ENCODE measurements at regions of chr2 and their contacts with region 1.

Region 1: GRCh38 chr2:204365811-204366210 is 179.5 kb upstream of the PARD3B start:
- DNase-seq: no peak
- ATAC-seq: no peak
- H3K4me3 ChIP-seq: no peak overlapping the region
- H3K27ac ChIP-seq: no peak overlapping the region
- H3K4me1 ChIP-seq: no peaks in the 10 kb centered on the region
- H3K27me3 ChIP-seq: no peaks in the 10 kb centered on the region

Region 2: GRCh38 chr2:204608237-204608939 is 242.6 kb after region 1 on chr2:
- intact Hi-C with region 1: loop called in 1 of 4 experiments (anchors 10 kb)
- DNase-seq: peak in 2 of 3 donors; percentile 32 to 54
- ATAC-seq: peak; percentile 65 to 78
- H3K4me3 ChIP-seq: no peak overlapping the region
- H3K27ac ChIP-seq: no peak overlapping the region
- H3K4me1 ChIP-seq: peaks cover 13% of the 10 kb centered on the region
- H3K27me3 ChIP-seq: no peaks in the 10 kb centered on the region

Measured in right cardiac atrium (tissue), 5 donors.